Pancreas (tissue), 10 donors: ENCODE measurements at regions of chr3 and their contacts with region 1.

Region 1: DNA sequence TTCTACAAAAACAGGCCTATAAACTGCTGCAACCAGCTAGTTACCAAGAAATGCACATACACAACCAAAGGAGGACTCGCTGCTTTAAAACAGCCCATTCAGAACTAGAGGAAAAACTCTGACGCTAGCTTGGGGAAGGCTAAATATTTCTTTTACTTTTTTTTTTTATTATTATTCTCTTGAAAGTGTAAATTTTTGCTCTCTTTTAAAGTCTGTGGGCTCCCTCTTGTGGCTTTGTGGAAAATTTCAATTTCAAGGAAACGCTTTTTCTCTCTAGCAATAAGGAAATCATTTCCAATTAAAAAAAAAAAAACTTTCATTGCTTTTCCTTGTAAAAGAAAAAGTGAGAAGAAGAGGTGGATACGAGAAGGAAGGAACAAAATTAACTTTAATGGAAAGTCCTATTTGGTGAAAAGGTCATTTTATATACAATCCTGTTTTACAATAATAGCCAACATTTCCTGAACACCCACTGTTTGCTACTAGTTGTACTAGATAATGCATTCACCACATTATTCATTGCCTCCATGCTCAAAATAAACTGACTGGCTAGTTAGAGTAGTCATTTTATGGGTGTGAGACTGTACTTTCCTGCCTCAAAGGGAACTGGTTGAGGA is 51.2 kb upstream of the SAMMSON start:
- DNase-seq: no peak
- ATAC-seq: peak in 3 of 4 donors; percentile 65 to 72 (median 70)
- H3K4me3 ChIP-seq: no peak overlapping the region
- H3K27ac ChIP-seq: no peak overlapping the region
- H3K4me1 ChIP-seq: peaks cover 0 to 15% (median 13%) of the 10 kb centered on the region in 3 donors
- H3K27me3 ChIP-seq: no peaks in the 10 kb centered on the region
- CTCF ChIP-seq: peak; percentile 8 to 64 (median 46)

Region 2: GRCh38 chr3:69219101-69219708 is 729.1 kb before region 1 on chr3:
- intact Hi-C with region 1: no loop called
- DNase-seq: no peak
- ATAC-seq: peak in 2 of 4 donors; percentile 29 to 45
- H3K4me3 ChIP-seq: no peak overlapping the region
- H3K27ac ChIP-seq: no peak overlapping the region
- H3K4me1 ChIP-seq: peaks cover 0 to 4% (median 0%) of the 10 kb centered on the region in 3 donors
- H3K27me3 ChIP-seq: no peaks in the 10 kb centered on the region
- CTCF ChIP-seq: no peak

Region 3: DNA sequence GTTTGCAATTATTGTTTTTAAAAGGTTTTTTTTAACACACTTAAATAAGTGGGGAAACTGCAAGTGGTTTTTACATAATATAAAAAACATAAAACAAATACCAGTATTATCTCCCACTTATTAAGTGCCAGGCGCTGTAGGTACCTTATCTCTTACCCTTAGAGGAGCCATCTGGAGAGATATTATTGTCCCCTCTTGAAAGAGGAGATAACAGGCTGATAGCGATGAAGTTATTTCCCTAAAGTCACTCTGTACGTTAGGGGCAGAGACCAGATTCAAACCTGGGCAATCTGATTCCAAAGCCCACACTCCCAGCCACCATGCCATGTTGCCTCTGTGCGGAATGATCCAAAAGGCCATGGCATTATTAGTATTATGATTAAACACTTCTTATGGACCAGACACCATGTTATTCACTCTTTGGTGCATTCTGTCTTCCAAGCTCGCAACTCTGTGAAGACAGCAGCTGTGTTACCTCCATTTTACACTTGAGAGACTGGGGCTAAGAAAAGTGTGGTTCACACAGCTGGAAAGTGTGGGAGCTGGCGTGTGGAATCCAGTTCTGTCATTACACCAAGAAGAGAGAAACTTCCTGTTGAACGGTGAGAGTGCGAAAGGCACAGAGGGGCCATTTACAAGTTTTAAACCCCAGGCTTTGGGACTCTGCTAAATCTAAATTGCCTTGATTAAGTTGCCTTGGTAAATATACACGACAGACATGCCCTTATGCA is 289.0 kb before region 1 on chr3:
- intact Hi-C with region 1: no loop called
- DNase-seq: no peak
- ATAC-seq: no peak
- H3K4me3 ChIP-seq: no peak overlapping the region
- H3K27ac ChIP-seq: no peak overlapping the region
- H3K4me1 ChIP-seq: no peaks in the 10 kb centered on the region
- H3K27me3 ChIP-seq: no peaks in the 10 kb centered on the region
- CTCF ChIP-seq: no peak

Region 4: DNA sequence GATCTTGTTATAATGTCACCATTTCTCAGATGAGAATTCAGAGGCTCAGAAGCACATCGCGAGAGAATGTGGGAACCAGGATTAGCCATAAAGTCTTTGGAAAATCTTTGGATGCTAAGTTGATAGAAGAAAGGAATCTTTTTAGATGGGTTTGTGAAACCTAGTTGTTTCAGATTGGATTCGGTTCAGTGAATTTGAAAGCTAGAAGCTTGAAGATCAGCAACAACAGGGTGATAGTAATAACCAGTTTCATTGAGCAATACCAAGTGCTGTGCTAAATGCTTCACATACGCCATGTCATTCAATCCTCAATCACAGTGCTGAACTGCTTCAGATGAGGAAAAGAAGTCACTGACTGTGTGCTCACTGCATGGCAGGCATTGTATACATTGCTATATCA is 256.5 kb before region 1 on chr3:
- intact Hi-C with region 1: loop called in 2 of 3 experiments (anchors 5 kb)
- DNase-seq: no peak
- ATAC-seq: no peak
- H3K4me3 ChIP-seq: no peak overlapping the region
- H3K27ac ChIP-seq: no peak overlapping the region
- H3K4me1 ChIP-seq: no peaks in the 10 kb centered on the region
- H3K27me3 ChIP-seq: no peaks in the 10 kb centered on the region
- CTCF ChIP-seq: no peak

Region 5: GRCh38 chr3:70064194-70064779 is 115.9 kb after region 1 on chr3:
- intact Hi-C with region 1: no loop called
- DNase-seq: peak in 1 of 6 donors; percentile 6
- ATAC-seq: peak in 3 of 4 donors; percentile 71 to 75 (median 74)
- H3K4me3 ChIP-seq: no peak overlapping the region
- H3K27ac ChIP-seq: no peak overlapping the region
- H3K4me1 ChIP-seq: no peaks in the 10 kb centered on the region
- H3K27me3 ChIP-seq: peaks cover 0 to 3% (median 0%) of the 10 kb centered on the region in 4 donors
- CTCF ChIP-seq: peak; percentile 36 to 66 (median 48)